ENCODE measurements at regions of chr20 and their contacts with region 1.

Region 1: GRCh38 chr20:17878912-17879602 is 89.5 kb downstream of the SNX5 start:
- DNase-seq: peak; percentile 59
- H3K4me3 ChIP-seq: peak overlapping the region; percentile 29
- H3K27ac ChIP-seq: peak overlapping the region; percentile 68
- H3K4me1 ChIP-seq: peaks cover 32% of the 10 kb centered on the region
- CTCF ChIP-seq: peak; percentile 77

Region 2: DNA sequence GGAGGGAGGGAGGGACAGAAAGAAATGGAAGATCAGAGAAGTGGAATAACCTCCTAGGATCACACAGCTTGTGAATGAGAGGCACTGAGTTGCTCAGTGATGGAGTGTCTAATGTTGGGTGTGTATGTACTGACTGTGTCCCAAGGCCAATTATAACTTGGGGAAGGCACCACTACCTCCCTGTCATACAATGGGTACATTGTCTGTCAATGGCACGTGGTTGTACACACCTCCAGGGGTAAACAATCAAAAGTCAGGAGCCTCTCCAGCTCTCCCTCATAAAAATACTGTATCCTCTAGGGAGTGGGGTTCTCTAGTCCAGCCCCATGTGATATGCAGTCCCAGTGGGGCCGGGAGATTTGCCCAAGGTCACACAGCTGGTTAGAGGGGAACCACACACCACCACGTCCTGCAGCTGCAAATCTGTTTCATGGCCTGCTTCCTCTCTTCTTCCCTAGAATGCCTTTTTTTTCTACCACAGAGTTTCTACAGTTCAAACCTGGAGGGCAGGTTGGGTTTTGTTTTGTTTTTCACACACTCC is 23.0 kb before region 1 on chr20:
- CTCF ChIA-PET with region 1: no interaction called
- POLR2A ChIA-PET with region 1: interaction called, 5 read pairs
- intact Hi-C with region 1: loop called (anchors 2 kb)
- DNase-seq: peak; percentile 93
- H3K4me3 ChIP-seq: no peak overlapping the region
- H3K27ac ChIP-seq: peak overlapping the region; percentile 66
- H3K4me1 ChIP-seq: peaks cover 56% of the 10 kb centered on the region
- CTCF ChIP-seq: no peak